ENCODE measurements at regions of chr16 and their contacts with region 1.

Region 1: DNA sequence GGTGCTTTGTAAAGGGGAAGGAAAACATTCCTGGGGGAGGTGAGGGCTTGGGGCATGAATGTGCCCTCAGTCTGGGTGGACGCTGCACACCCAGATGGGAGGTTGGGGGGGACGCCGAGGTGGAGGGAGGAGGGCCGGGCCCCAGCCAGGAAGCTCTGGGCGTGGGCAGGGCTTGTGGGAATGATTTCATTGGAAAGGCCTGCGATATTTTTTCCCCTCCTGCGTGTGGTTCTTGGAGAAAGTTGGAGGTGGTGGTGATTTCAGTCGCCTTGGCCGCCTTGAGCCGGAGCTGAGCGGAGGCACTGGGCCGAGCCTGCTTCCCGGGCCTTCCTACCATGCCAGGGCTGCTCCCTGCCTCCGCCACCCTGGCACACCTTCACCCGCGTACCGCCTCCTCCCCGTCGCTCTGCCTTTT is 26.4 kb upstream of the CLEC18A start:
- DNase-seq: peak; percentile 82

Region 2: DNA sequence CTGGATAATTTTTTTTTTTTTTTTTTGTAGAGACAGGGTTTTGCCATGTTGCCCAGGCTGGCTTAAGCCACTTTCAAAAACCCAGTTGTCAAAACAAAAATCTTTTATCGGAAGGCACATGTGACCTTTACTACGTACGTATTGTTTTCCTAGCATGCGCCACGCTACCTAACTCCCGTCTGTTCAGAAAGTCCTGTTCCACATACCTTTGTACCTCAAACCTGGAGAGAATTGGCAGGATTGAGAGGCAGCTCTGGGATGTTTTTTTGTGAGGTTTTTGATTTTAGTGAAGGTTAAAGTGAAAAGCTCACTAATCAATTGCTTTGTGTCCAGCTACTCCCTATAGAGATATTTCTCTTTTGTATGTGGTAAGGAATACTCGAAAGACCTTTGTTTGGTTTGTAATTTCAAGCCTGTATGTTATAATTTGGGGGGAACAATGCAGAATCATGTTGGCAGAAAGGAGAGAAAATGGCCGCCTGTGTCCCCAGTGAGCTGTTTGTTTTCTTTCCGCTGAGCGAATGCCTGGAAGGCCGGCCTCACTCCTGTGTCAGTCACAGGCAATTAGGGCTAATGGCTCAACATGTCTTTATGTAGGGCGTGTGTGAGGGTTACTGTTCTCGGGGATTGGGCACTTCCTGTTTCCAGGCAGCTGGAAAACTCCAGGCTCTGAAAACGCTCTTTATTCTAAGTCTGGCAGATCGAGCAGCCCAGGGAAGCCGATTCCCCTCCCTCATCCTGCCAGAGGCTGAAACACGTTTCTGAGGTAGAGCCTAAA is 34.5 kb before region 1 on chr16:
- intact Hi-C with region 1: loop called (anchors 5 kb)
- DNase-seq: no peak